Naive thymus-derived CD4-positive, alpha-beta T cell (primary cell): ENCODE measurements at regions of chr7 and their contacts with region 1.

Region 1: DNA sequence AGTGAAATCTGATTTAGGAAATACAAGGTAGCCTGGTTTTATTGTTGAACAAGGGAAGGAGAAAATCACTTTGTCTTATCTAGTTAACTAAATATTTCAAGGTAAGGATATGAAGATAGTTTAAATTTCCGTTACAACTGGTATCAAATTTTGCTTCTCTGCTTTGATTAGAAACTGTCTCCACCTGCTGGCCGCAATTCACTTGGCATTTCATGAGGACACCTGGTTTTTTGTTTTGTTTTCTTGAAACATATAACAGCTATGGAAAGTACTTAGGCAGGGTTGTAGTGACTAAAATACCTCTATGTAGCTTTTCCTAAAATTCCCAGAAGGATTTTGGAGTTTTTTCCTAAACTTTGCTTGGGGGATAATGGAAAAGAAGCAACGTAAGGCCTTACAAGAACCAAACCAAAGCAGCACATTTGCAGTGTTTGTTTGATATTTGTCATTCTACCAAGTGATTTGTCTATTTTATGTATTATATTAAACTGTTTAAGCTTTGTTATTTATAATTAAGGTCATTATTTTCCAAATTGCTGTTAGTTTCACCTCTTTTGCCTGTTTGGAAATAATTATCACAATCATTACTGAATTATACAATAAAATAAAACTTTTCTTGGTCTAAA is 73.6 kb downstream of the AHCYL2 start:
- DNase-seq: peak in 7 of 9 donors; percentile 15 to 53 (median 37)
- ATAC-seq: no peak
- H3K4me3 ChIP-seq: no peak overlapping the region
- H3K4me3 Mint-ChIP-seq: no peak overlapping the region
- H3K27ac ChIP-seq: no peak overlapping the region
- H3K27ac Mint-ChIP-seq: no peak overlapping the region
- H3K4me1 ChIP-seq: no peaks in the 10 kb centered on the region
- H3K4me1 Mint-ChIP-seq: peaks cover 0 to 14% (median 8%) of the 10 kb centered on the region in 7 donors
- H3K27me3 ChIP-seq: no peaks in the 10 kb centered on the region
- H3K27me3 Mint-ChIP-seq: peaks cover 0 to 5% (median 0%) of the 10 kb centered on the region in 5 donors

Region 2: DNA sequence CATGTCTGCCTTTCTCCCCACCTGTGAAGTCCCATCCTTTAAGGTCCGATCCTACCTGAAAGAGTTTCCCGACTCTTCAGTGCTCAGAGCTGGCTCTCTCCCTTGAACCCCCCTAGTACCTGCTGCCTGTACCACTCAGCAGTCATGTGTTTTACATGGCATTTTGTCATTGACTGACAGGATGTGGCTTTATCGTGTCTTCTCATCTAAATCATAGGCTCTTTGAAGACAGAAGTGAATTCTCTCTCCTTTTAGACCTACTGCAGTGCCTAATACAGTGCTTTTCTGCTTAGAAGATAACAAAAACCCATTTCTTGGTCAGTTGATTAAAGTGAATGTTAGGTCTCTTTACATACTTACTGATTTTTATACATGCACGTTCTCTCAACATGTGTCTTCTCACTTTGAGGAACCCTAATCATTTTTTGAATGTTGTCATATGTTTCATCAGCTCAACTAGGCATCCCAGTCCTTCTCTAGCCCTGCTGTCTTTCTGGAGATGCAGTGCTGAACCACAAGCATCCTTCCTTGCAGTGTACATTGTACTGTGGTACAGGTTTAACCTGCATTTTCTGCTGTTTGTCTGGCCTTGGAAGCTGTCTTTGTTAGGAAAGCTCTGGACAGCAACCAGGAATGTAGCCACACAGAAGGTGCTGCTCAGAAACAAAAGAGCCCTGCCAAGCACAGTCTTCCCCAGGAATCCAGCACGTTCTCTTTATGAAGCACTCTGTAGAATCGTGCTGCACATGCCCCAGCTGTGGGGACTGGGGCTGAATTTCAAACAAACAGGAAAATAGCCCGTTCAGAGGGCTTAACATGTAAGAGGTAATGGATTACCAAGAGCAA is 1239.0 kb before region 1 on chr7:
- CTCF ChIA-PET with region 1: no interaction called
- POLR2A ChIA-PET with region 1: no interaction called
- intact Hi-C with region 1: no loop called
- DNase-seq: peak in 7 of 9 donors; percentile 33 to 71 (median 62)
- ATAC-seq: peak; percentile 82
- H3K4me3 ChIP-seq: no peak overlapping the region
- H3K4me3 Mint-ChIP-seq: peak overlapping the region; percentile 64 to 84 (median 76)
- H3K27ac ChIP-seq: no peak overlapping the region
- H3K27ac Mint-ChIP-seq: peak overlapping the region; percentile 40 to 89 (median 79)
- H3K4me1 ChIP-seq: peaks cover 15 to 43% of the 10 kb centered on the region in 2 donors
- H3K4me1 Mint-ChIP-seq: peaks cover 31 to 96% (median 73%) of the 10 kb centered on the region in 7 donors
- H3K27me3 ChIP-seq: no peaks in the 10 kb centered on the region
- H3K27me3 Mint-ChIP-seq: no peaks in the 10 kb centered on the region

Region 3: DNA sequence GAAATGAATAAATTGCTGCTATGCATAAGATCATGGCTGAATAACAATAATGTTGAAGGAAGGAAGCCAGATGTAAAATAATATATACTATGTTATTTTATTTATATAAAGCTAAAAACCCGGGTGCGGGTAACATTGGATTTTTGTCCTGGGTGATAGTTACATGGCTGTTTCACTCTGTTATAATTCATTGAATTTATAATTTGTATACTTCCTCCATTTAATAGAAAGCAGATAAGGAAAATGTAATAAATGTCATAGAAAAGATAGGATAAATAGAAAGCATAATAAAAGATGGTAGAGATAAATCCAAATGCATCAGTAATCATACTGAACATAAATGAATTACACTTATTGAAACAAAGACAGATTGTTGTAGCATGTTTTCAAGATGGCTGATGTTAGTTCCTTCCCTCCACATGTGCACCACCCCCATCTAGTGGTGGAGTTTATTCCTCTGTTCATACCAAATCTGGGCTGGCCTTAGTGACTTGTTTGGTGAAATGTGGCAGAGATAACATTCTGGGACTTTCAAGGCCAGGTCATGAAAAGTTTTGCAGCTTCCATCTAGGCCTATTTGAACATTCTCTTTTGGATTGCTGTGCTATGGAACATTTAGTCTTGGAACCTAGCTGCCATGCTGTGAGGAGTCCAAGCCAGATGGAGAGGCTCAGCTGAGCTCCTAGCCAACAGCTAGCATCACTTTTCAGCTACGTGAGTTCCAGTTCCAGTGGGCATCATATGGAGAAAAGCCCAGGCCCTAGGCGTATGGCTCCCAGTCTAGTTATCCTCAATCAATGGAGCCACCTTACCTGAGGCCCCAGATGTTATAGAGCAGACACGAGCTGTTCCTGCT is 26.7 kb before region 1 on chr7:
- CTCF ChIA-PET with region 1: interaction called, 4 read pairs
- POLR2A ChIA-PET with region 1: no interaction called
- intact Hi-C with region 1: loop called in 1 of 2 experiments (anchors 1 kb)
- DNase-seq: peak; percentile 18 to 80 (median 74)
- ATAC-seq: peak; percentile 98
- H3K4me3 ChIP-seq: no peak overlapping the region
- H3K4me3 Mint-ChIP-seq: peak overlapping the region in 8 of 10 donors; percentile 25 to 75 (median 60)
- H3K27ac ChIP-seq: no peak overlapping the region
- H3K27ac Mint-ChIP-seq: peak overlapping the region in 3 of 9 donors; percentile 50 to 86 (median 73)
- H3K4me1 ChIP-seq: no peaks in the 10 kb centered on the region
- H3K4me1 Mint-ChIP-seq: peaks cover 7 to 20% (median 11%) of the 10 kb centered on the region in 7 donors
- H3K27me3 ChIP-seq: no peaks in the 10 kb centered on the region
- H3K27me3 Mint-ChIP-seq: no peaks in the 10 kb centered on the region